ENCODE measurements at regions of chr21 and their contacts with region 1.

Region 1: DNA sequence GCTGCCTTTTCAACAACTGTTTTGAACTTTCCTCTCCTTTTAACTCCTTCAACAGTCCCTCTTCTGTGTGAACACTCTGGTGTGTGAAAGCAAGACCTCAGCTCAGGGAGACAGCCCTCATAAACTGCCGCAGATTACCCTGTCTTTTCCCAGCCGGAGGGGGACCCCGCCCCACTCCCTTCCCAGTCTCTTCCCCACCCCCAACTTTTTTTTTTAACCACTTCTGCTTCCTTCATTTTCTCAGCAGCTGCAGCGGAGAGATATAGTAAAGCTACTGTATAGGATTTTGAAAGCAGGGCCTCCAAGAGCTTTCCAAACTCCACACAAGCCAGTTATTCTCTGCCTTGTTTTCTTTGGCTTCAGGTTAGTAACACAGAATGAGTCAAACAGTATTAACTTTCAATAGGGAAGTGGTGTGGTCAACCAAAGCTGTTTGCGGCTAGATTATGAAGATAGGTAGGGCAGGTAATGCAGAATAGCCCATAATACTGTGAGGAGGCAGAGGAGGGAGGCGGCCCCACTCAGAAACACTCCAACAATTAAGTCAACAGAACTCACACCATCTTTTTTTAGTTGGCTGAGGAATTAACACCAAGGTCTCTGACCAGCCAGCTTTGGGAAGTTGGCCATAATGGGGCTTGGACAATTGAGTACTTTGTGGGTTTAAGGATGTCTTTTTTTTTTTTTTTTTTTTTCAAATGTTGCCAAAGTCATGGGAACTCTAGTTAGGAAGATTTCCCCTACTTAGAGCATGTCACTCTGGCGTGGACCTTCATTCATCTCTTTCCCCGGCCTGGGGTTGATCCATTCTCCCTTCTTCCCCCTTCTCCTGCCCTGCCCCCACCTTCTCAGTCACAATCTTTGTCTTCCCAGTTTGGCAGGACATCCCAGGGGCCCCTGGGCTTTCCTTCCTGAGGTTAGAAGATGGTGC is 177.0 kb downstream of the CLIC6 start:
- DNase-seq: peak; percentile 95
- ATAC-seq: peak; percentile 85
- H3K4me3 ChIP-seq: peak overlapping the region; percentile 30; the same call in 1 of the 2 replicates
- H3K27ac ChIP-seq: peak overlapping the region; percentile 85
- H3K4me1 ChIP-seq: peaks cover 36% of the 10 kb centered on the region
- H3K27me3 ChIP-seq: no peaks in the 10 kb centered on the region
- CTCF ChIP-seq: no peak

Region 2: DNA sequence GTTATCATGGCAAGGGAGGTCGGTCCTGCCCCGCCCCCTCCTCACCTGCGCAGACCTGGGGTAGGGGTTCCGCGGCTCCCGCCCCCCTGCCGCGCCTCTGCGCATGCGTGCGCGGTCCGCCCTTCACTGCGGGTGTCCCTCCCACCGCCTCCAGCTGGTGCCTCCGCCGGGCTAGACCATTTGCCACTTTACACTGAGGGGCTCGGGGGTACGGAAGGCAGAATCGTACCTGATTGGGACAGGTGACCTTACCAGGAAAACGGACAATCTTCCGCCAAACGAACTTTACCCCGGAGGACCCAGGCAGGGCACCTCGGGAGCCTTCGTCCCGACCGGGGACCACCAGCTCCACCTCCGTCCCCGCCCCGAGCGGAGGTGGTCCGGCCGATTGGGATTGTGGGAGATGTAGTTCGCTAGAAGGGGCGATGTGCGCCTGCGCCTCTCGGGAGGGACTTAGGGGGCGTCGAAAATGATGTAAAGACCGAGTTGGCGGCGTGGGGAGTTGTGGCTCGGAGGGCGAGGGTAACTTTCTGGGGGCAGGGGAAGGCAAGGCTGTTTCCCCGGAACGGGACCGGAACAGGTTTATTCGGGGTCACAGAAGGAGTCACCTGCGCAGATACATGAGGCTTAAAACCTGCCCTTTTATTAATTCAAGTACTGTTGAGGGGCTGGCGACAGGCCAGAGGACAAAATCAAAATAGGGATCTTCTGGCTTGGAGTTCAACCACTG is 1354.2 kb before region 1 on chr21 and contains the start of gene DNAJC28:
- CTCF ChIA-PET with region 1: no interaction called
- POLR2A ChIA-PET with region 1: no interaction called
- intact Hi-C with region 1: no loop called
- DNase-seq: peak; percentile 95
- ATAC-seq: peak; percentile 96
- H3K4me3 ChIP-seq: peak within 1 kb of the TSS; percentile 82
- H3K27ac ChIP-seq: no peak within 1 kb of the TSS
- H3K4me1 ChIP-seq: no peaks in the 10 kb centered on the region
- H3K27me3 ChIP-seq: no peaks in the 10 kb centered on the region
- CTCF ChIP-seq: no peak
- total RNA-seq, gene DNAJC28: 0.29 and 0.44 TPM in 2 replicates

Region 3: DNA sequence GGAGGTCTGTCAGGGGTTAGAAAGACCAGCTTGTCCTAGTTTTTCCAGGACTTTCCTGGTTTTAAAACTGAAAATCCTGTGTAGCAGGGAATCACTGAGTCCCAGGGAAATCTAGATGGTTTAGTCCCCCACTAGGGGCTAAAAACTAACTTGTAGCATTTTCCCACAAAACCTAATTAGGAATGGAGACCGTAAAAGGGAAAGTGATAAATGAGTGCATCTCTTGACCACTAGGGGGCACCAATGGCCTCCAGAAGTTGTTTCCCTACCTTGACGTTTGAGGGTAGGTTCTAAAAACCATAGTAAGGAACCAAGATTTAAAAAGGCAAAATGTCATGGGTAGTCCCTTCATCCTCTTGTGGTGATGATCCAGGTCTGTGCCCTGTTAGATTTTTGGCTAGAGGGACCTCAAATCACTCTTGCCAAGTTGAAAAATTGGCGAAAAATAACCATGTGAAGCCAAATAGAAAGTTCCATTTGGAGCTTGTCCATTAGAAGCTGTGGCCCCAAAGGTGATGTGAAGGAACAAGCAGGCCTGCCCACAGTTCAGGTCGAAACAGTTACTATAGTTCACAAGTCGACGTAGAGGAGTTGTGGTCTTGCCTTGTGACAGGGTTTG is 152.5 kb before region 1 on chr21:
- CTCF ChIA-PET with region 1: no interaction called
- POLR2A ChIA-PET with region 1: no interaction called
- intact Hi-C with region 1: loop called (anchors 5 kb)
- DNase-seq: peak; percentile 83
- ATAC-seq: peak; percentile 65
- H3K4me3 ChIP-seq: no peak overlapping the region
- H3K27ac ChIP-seq: no peak overlapping the region
- H3K4me1 ChIP-seq: peaks cover 38% of the 10 kb centered on the region
- H3K27me3 ChIP-seq: no peaks in the 10 kb centered on the region
- CTCF ChIP-seq: peak; percentile 93

Region 4: GRCh38 chr21:34745557-34746255 is 100.1 kb before region 1 on chr21:
- CTCF ChIA-PET with region 1: interaction called, 11 read pairs
- POLR2A ChIA-PET with region 1: interaction called, 3 read pairs
- intact Hi-C with region 1: loop called (anchors 1 kb)
- DNase-seq: peak; percentile 93
- ATAC-seq: peak; percentile 68
- H3K4me3 ChIP-seq: no peak overlapping the region
- H3K27ac ChIP-seq: no peak overlapping the region
- H3K4me1 ChIP-seq: peaks cover 31% of the 10 kb centered on the region
- H3K27me3 ChIP-seq: no peaks in the 10 kb centered on the region
- CTCF ChIP-seq: peak; percentile 97

Region 5: DNA sequence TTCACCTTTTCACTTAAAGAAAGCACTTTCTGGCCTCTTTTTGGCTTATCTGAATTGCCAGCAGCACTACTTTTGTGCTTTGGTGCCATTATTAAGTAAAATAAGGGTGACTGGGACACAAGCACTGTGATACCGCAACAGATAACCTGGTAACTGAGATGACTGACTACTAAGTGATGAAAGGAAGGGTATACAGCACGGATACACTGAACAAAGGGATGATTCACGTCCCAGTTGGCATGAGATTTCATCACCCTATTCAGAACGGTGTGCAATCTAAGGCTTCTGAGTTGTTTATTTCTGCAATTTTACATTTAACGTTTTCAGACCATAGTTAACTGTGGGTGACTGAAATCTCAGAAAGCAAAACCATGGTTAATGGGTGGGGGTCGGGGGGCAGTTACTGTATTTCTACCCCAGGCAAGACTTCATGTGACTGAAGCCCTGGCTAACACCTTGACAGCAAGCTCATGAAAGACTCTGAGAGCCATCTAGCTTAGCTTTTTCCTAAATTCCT is 74.2 kb before region 1 on chr21:
- CTCF ChIA-PET with region 1: no interaction called
- POLR2A ChIA-PET with region 1: interaction called, 3 read pairs
- intact Hi-C with region 1: loop called (anchors 1 kb)
- DNase-seq: peak; percentile 90
- ATAC-seq: peak; percentile 100
- H3K4me3 ChIP-seq: no peak overlapping the region
- H3K27ac ChIP-seq: peak overlapping the region; percentile 29; the same call in 1 of the 2 replicates
- H3K4me1 ChIP-seq: peaks cover 36% of the 10 kb centered on the region
- H3K27me3 ChIP-seq: no peaks in the 10 kb centered on the region
- CTCF ChIP-seq: no peak

Region 6: DNA sequence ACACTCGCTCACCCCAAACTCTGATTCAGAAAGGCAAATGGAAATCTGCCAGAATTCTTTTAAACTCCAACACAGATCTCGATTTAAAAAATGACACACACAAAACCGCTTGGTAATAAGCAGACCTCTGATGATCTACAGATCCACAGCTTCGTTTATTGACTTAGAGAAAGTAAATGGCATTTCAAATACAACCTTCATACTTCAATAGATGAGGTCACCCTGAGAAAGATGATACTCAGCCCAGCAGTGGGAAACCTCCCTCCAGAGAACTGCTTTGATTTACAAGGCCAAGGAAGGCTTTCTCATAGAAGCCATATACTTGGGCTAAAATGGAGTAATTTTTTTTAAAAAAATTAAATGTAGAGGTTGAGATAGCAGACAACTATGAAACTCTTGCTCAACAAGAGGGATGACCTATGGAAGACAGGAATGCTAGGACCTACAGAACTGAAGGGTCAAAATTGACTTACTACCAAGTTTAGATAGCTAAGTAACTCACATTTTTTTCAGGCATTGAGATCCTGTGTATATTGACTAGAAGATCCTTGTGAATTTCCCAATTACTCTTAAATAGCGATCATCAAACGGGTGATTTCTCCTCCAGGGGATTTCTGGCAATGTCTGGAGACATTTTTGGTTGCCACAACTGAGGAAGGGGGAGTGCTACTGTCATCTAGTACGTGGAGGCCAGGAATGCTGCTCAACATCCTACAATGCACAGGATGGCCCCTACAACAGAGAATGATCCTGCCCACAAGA is 33.1 kb before region 1 on chr21:
- CTCF ChIA-PET with region 1: interaction called, 6 read pairs
- POLR2A ChIA-PET with region 1: interaction called, 3 read pairs
- intact Hi-C with region 1: loop called (anchors 2 kb)
- DNase-seq: peak; percentile 93
- ATAC-seq: peak; percentile 53
- H3K4me3 ChIP-seq: no peak overlapping the region
- H3K27ac ChIP-seq: peak overlapping the region; percentile 96
- H3K4me1 ChIP-seq: peaks cover 80% of the 10 kb centered on the region
- H3K27me3 ChIP-seq: no peaks in the 10 kb centered on the region
- CTCF ChIP-seq: no peak

Region 7: GRCh38 chr21:34865928-34866284 is 20.1 kb after region 1 on chr21:
- CTCF ChIA-PET with region 1: no interaction called
- POLR2A ChIA-PET with region 1: interaction called, 3 read pairs
- intact Hi-C with region 1: loop called (anchors 1 kb)
- DNase-seq: peak; percentile 62
- ATAC-seq: peak; percentile 6; the same call in 1 of the 2 replicates
- H3K4me3 ChIP-seq: no peak overlapping the region
- H3K27ac ChIP-seq: peak overlapping the region; percentile 78
- H3K4me1 ChIP-seq: peaks cover 50% of the 10 kb centered on the region
- H3K27me3 ChIP-seq: no peaks in the 10 kb centered on the region
- CTCF ChIP-seq: no peak

Region 8: GRCh38 chr21:34915364-34915841 is 69.6 kb after region 1 on chr21:
- CTCF ChIA-PET with region 1: no interaction called
- POLR2A ChIA-PET with region 1: no interaction called
- intact Hi-C with region 1: no loop called
- DNase-seq: peak; percentile 57
- ATAC-seq: peak; percentile 90
- H3K4me3 ChIP-seq: no peak overlapping the region
- H3K27ac ChIP-seq: no peak overlapping the region
- H3K4me1 ChIP-seq: peaks cover 17% of the 10 kb centered on the region
- H3K27me3 ChIP-seq: no peaks in the 10 kb centered on the region
- CTCF ChIP-seq: no peak